CD4-positive, alpha-beta T cell (primary cell): ENCODE measurements at regions of chr6 and their contacts with region 1.

Region 1: GRCh38 chr6:114936080-114936479 is 593.3 kb upstream of the HS3ST5 start:
- DNase-seq: no peak
- ATAC-seq: no peak
- H3K4me3 ChIP-seq: no peak overlapping the region
- H3K4me3 Mint-ChIP-seq: no peak overlapping the region
- H3K27ac ChIP-seq: no peak overlapping the region
- H3K27ac Mint-ChIP-seq: no peak overlapping the region
- H3K4me1 ChIP-seq: no peaks in the 10 kb centered on the region
- H3K4me1 Mint-ChIP-seq: no peaks in the 10 kb centered on the region
- H3K27me3 ChIP-seq: no peaks in the 10 kb centered on the region
- H3K27me3 Mint-ChIP-seq: no peaks in the 10 kb centered on the region
- CTCF ChIP-seq: no peak

Region 2: DNA sequence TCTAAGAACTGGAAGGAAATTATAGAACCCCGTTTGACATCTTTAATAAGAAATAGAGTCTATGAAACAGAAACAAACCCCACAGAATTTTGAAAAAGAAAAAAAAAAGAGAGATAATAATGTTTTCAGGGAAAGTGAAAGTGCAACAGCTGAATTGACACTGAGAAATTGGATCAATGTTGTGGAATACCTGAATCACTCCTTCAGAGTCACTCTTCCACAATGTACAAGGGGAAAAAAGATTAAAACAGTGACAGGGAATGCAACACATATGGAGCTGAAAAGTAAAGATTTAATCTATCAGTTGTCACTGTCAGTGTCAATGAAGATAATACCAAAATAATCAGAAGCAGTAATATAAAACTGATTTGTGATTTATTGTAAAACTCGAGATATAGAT is 72.5 kb before region 1 on chr6:
- CTCF ChIA-PET with region 1: no interaction called
- POLR2A ChIA-PET with region 1: no interaction called
- intact Hi-C with region 1: loop called in 1 of 2 experiments (anchors 2 kb)
- DNase-seq: no peak
- ATAC-seq: no peak
- H3K4me3 ChIP-seq: no peak overlapping the region
- H3K4me3 Mint-ChIP-seq: no peak overlapping the region
- H3K27ac ChIP-seq: no peak overlapping the region
- H3K27ac Mint-ChIP-seq: no peak overlapping the region
- H3K4me1 ChIP-seq: no peaks in the 10 kb centered on the region
- H3K4me1 Mint-ChIP-seq: no peaks in the 10 kb centered on the region
- H3K27me3 ChIP-seq: no peaks in the 10 kb centered on the region
- H3K27me3 Mint-ChIP-seq: no peaks in the 10 kb centered on the region
- CTCF ChIP-seq: no peak